CD14-positive monocyte (primary cell): ENCODE measurements at regions of chr17 and their contacts with region 1.

Region 1: GRCh38 chr17:68771867-68772515 is 170.8 kb upstream of the FAM20A start:
- DNase-seq: peak; percentile 47 to 61 (median 57)
- H3K4me3 ChIP-seq: peak overlapping the region; percentile 3 to 64 (median 57)
- H3K4me3 Mint-ChIP-seq: peak overlapping the region; percentile 73 to 86
- H3K27ac ChIP-seq: no peak overlapping the region
- H3K27ac Mint-ChIP-seq: peak overlapping the region in 5 of 7 donors; percentile 8 to 74 (median 48)
- H3K4me1 ChIP-seq: peaks cover 0 to 2% of the 10 kb centered on the region in 2 donors
- H3K4me1 Mint-ChIP-seq: peaks cover 14% of the 10 kb centered on the region
- H3K27me3 ChIP-seq: no peaks in the 10 kb centered on the region
- H3K27me3 Mint-ChIP-seq: peaks cover 1 to 6% (median 3%) of the 10 kb centered on the region in 3 donors
- CTCF ChIP-seq: peak; percentile 80

Region 2: GRCh38 chr17:69390795-69391501 is 619.0 kb after region 1 on chr17:
- intact Hi-C with region 1: loop called in 1 of 2 experiments (anchors 10 kb)
- DNase-seq: no peak
- H3K4me3 ChIP-seq: no peak overlapping the region
- H3K4me3 Mint-ChIP-seq: no peak overlapping the region
- H3K27ac ChIP-seq: no peak overlapping the region
- H3K27ac Mint-ChIP-seq: no peak overlapping the region
- H3K4me1 ChIP-seq: no peaks in the 10 kb centered on the region
- H3K4me1 Mint-ChIP-seq: peaks cover 4% of the 10 kb centered on the region
- H3K27me3 ChIP-seq: no peaks in the 10 kb centered on the region
- H3K27me3 Mint-ChIP-seq: peaks cover 9 to 17% (median 12%) of the 10 kb centered on the region in 3 donors
- CTCF ChIP-seq: no peak